ENCODE measurements at regions of chr6 and their contacts with region 1.

Region 1: GRCh38 chr6:77620278-77620882 is 32.5 kb upstream of the MEI4 start:
- DNase-seq: peak; percentile 10
- H3K4me3 ChIP-seq: no peak overlapping the region
- H3K27ac ChIP-seq: no peak overlapping the region
- H3K4me1 ChIP-seq: no peaks in the 10 kb centered on the region
- H3K27me3 ChIP-seq: no peaks in the 10 kb centered on the region
- CTCF ChIP-seq: peak; percentile 65 to 68

Region 2: DNA sequence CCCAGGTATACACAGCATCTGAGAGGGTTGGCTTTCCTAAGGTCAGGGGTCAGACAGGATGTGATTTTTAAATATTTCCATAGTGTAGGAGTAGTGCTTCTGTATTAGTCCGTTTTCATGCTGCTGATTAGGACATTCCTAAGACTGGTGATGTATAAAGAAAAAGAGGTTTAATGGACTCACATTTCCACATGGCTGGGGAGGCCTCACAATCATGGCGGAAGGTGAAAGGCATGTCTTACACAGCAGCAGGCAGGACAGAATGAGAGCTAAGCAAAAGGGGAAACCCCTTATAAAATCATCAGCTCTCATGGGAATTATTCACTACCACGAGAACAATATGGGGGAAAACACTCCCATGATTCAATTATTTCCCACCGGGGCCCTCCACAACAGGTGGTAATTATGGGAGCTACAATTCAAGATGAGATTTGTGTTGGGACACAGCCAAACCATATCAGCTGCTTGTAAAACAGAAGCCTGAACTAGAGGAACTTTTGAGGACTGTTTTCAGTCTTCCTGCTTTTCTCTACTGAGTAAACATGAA is 58.5 kb before region 1 on chr6:
- CTCF ChIA-PET with region 1: no interaction called
- dilution Hi-C with region 1: no loop called
- in situ Hi-C with region 1: no loop called
- intact Hi-C with region 1: no loop called
- DNase-seq: no peak
- H3K4me3 ChIP-seq: no peak overlapping the region
- H3K27ac ChIP-seq: no peak overlapping the region
- H3K4me1 ChIP-seq: no peaks in the 10 kb centered on the region
- H3K27me3 ChIP-seq: no peaks in the 10 kb centered on the region
- CTCF ChIP-seq: no peak

Region 3: DNA sequence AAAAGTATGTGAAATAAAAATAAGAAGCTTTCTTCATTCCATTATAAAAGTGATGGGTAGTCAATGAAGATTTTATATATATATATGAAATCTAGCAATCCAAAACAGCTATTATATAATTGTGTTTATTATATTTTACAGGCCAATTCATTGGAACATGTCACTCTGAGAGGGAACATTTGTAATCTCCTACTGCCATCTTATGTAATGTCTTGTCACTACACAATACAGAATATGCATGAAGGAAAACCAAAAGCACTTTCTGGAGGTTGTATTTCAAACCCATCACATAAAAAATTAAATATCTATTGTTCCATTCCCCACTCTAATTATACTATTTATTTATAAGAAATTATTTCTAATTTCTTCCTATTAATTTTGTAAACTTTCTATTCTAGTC is 1215.4 kb after region 1 on chr6:
- CTCF ChIA-PET with region 1: no interaction called
- dilution Hi-C with region 1: no loop called
- in situ Hi-C with region 1: no loop called
- intact Hi-C with region 1: loop called (anchors 10 kb)
- DNase-seq: peak; percentile 9
- H3K4me3 ChIP-seq: no peak overlapping the region
- H3K27ac ChIP-seq: no peak overlapping the region
- H3K4me1 ChIP-seq: no peaks in the 10 kb centered on the region
- H3K27me3 ChIP-seq: no peaks in the 10 kb centered on the region
- CTCF ChIP-seq: peak in 1 of 2 donors; percentile 51